CD14-positive monocyte (primary cell): ENCODE measurements at regions of chr6 and their contacts with region 1.

Region 1: GRCh38 chr6:136783495-136784270 is 8.6 kb downstream of the MAP3K5 start:
- DNase-seq: peak; percentile 78 to 90 (median 88)
- H3K4me3 ChIP-seq: peak overlapping the region; percentile 68 to 88 (median 88)
- H3K4me3 Mint-ChIP-seq: peak overlapping the region; percentile 87 to 99
- H3K27ac ChIP-seq: peak overlapping the region; percentile 80 to 83
- H3K27ac Mint-ChIP-seq: peak overlapping the region; percentile 94 to 98 (median 97)
- H3K4me1 ChIP-seq: peaks cover 77 to 89% of the 10 kb centered on the region in 2 donors
- H3K4me1 Mint-ChIP-seq: peaks cover 81% of the 10 kb centered on the region
- H3K27me3 ChIP-seq: no peaks in the 10 kb centered on the region
- H3K27me3 Mint-ChIP-seq: peaks cover 0 to 2% (median 2%) of the 10 kb centered on the region in 3 donors
- CTCF ChIP-seq: no peak

Region 2: GRCh38 chr6:136289579-136290409 is 493.9 kb before region 1 on chr6 and contains the start of gene BCLAF1:
- intact Hi-C with region 1: loop called in 1 of 2 experiments (anchors 10 kb)
- DNase-seq: peak; percentile 100
- H3K4me3 ChIP-seq: peak within 1 kb of the TSS; percentile 75 to 81 (median 76)
- H3K4me3 Mint-ChIP-seq: peak within 1 kb of the TSS; percentile 96 to 100
- H3K27ac ChIP-seq: peak within 1 kb of the TSS; percentile 99 to 100
- H3K27ac Mint-ChIP-seq: peak within 1 kb of the TSS; percentile 100
- H3K4me1 ChIP-seq: peaks cover 32 to 53% of the 10 kb centered on the region in 2 donors
- H3K4me1 Mint-ChIP-seq: peaks cover 45% of the 10 kb centered on the region
- H3K27me3 ChIP-seq: no peaks in the 10 kb centered on the region
- H3K27me3 Mint-ChIP-seq: peaks cover 0 to 3% (median 0%) of the 10 kb centered on the region in 3 donors
- CTCF ChIP-seq: no peak
- polyA plus RNA-seq, gene BCLAF1: 32.5 to 75.8 (median 47.0) TPM

Region 3: DNA sequence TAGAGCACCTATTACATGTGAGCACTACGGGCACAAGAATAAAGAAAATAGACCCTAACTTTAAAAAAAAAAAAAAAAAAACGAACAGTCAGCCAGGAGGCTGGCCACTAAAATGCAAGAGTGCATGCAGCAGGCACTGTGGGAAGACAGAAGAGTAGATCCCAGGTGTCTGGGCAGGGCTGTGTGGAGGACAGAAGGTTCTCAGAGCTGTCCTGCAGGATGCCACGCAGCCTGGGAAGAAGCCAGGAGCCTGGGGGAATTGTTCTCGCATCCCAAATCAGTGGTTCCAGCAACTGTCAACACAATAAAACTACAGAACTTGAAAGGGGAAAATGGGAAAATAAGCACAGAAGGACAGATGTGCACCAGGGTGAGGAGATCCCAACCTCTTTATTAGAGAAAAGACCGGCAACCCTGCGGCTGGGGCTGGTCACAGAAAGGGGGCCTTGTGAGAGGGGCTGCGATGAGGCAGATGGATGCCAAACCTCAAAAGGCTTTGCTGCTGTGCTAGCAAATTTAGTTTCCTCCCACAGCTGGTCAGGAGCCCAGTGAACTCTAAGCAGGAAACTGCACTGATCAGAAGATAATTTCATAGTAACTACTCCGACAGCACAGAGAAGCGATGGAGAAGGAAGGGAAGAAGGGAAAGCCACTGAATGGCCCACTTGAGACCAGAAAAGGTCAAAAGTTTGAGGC is 22.3 kb before region 1 on chr6:
- intact Hi-C with region 1: no loop called
- DNase-seq: no peak
- H3K4me3 ChIP-seq: peak overlapping the region; percentile 3 to 59 (median 11)
- H3K4me3 Mint-ChIP-seq: peak overlapping the region; percentile 35 to 59
- H3K27ac ChIP-seq: peak overlapping the region; percentile 81 to 83
- H3K27ac Mint-ChIP-seq: peak overlapping the region; percentile 83 to 92 (median 88)
- H3K4me1 ChIP-seq: peaks cover 81 to 91% of the 10 kb centered on the region in 2 donors
- H3K4me1 Mint-ChIP-seq: peaks cover 80% of the 10 kb centered on the region
- H3K27me3 ChIP-seq: no peaks in the 10 kb centered on the region
- H3K27me3 Mint-ChIP-seq: no peaks in the 10 kb centered on the region
- CTCF ChIP-seq: no peak

Region 4: GRCh38 chr6:137233911-137234863 is 450.5 kb after region 1 on chr6:
- intact Hi-C with region 1: loop called in 1 of 2 experiments (anchors 10 kb)
- DNase-seq: peak; percentile 87 to 99 (median 92)
- H3K4me3 ChIP-seq: peak overlapping the region in 2 of 3 experiments; percentile 13 to 57
- H3K4me3 Mint-ChIP-seq: peak overlapping the region; percentile 1 to 69
- H3K27ac ChIP-seq: peak overlapping the region; percentile 97 to 98
- H3K27ac Mint-ChIP-seq: peak overlapping the region; percentile 93 to 98 (median 97)
- H3K4me1 ChIP-seq: peaks cover 93 to 100% of the 10 kb centered on the region in 2 donors
- H3K4me1 Mint-ChIP-seq: peaks cover 86% of the 10 kb centered on the region
- H3K27me3 ChIP-seq: no peaks in the 10 kb centered on the region
- H3K27me3 Mint-ChIP-seq: no peaks in the 10 kb centered on the region
- CTCF ChIP-seq: no peak